Heart right ventricle (tissue), 16 donors: ENCODE measurements at regions of chr20 and their contacts with region 1.

Region 1: GRCh38 chr20:1816384-1817381 is 78.5 kb upstream of the SIRPA start:
- DNase-seq: peak in 1 of 2 donors; percentile 56
- ATAC-seq: peak; percentile 59 to 86 (median 79)
- H3K4me3 ChIP-seq: no peak overlapping the region
- H3K27ac ChIP-seq: peak overlapping the region in 9 of 10 donors; percentile 33 to 88 (median 82)
- H3K4me1 ChIP-seq: peaks cover 17 to 82% (median 50%) of the 10 kb centered on the region in 9 donors
- H3K27me3 ChIP-seq: peaks cover 0 to 8% (median 0%) of the 10 kb centered on the region in 7 donors
- CTCF ChIP-seq: no peak

Region 2: DNA sequence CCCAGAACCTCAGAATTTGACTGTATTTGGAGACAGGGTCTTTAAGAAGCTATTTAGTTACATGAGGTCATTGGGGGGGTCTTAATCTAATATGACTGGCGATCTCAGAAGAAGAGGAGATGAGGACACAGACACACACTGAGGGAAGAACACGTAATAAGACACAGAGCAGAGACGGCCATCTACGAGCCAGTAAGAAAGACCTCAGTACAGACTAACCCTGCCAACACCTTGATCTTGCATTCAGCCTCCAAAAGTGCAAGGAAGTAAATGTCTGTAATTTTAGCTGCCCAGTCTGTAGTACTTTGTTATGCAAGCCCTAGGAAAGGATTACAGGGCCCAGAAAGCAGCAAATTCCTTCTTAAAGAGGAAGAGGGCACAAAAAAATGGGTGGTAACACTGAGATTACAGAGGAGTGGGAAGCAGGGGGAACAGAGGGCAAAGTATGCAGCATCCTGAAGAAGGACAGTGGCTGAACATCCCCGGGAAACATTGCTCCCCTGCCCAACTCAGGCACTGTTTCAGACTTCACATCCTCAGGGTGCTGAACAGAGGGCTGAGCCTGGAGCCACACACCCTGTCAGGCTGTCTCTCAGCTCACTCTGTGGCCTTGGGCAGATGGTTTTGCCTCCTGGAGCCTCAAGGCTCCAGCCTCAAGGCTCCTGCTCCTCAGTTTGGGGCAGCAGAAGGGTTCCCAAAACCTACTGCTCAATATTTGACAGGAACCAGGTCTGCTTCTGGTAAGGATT is 131.2 kb before region 1 on chr20:
- intact Hi-C with region 1: no loop called
- DNase-seq: no peak
- ATAC-seq: no peak
- H3K4me3 ChIP-seq: peak overlapping the region in 1 of 10 donors; percentile 8
- H3K27ac ChIP-seq: peak overlapping the region in 1 of 10 donors; percentile 32
- H3K4me1 ChIP-seq: no peaks in the 10 kb centered on the region
- H3K27me3 ChIP-seq: peaks cover 0 to 17% (median 0%) of the 10 kb centered on the region in 7 donors
- CTCF ChIP-seq: no peak

Region 3: GRCh38 chr20:2140561-2140960 is 323.9 kb after region 1 on chr20:
- intact Hi-C with region 1: loop called in 1 of 10 experiments (anchors 10 kb)
- DNase-seq: peak; percentile 54 to 80
- ATAC-seq: peak; percentile 81 to 92 (median 84)
- H3K4me3 ChIP-seq: no peak overlapping the region
- H3K27ac ChIP-seq: peak overlapping the region; percentile 62 to 90 (median 80)
- H3K4me1 ChIP-seq: peaks cover 34 to 96% (median 75%) of the 10 kb centered on the region in 9 donors
- H3K27me3 ChIP-seq: no peaks in the 10 kb centered on the region
- CTCF ChIP-seq: no peak